ENCODE measurements at regions of chr15 and their contacts with region 1.

Region 1: DNA sequence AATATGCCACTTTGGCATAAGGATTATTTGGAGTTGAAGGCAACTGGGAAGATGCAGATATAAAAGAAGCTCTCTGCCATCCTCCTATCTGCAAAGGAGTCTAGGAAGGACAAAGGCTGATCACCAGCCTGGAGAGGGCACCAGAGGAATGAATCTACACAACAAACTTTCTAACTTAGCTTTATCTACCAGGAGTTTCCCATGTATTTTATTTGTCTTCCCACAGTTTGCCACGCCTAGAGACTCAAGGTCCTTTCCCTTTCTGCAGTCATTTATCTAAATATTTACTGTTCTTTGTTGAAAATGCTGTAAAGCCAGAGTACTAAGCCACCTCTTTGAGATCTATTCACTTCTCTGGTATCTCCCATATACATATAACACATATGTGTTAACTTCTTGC is 32.2 kb downstream of the GPR176 start:
- DNase-seq: peak; percentile 15
- ATAC-seq: peak; percentile 83
- H3K4me3 ChIP-seq: no peak overlapping the region
- H3K27ac ChIP-seq: no peak overlapping the region
- H3K4me1 ChIP-seq: no peaks in the 10 kb centered on the region
- H3K27me3 ChIP-seq: no peaks in the 10 kb centered on the region
- CTCF ChIP-seq: peak; percentile 63

Region 2: DNA sequence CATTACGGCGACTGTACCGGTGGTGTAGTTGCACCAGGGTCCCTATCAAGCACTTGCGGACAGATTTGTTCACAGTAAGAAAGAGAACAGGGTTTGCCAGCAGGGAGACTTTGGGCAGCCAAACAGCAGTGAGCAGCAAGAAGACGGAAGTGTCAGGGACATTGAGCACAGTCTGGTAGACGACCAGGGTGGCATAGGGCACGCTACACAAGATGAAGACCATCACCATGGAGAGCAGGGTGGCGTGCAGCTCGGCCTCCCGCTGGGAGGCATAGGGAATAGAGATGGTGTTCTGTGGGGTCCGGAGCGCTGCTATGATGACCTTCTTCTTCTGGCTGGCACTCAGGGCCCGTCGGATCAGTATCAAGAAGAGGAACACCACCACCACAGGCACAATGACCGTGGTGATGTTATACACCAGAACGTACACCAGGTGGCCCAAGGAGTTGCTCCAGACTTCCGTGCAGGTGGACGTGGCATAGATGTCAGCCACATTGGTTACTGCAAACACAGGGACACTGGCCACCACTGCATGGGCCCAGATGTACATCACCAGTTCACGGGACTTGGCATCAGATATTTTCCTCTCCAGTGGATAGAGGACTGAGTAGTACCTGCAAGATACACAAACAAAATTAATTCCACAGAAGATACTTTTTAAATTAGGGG is 86.1 kb before region 1 on chr15:
- CTCF ChIA-PET with region 1: no interaction called
- POLR2A ChIA-PET with region 1: no interaction called
- in situ Hi-C with region 1: loop called (anchors 5 kb)
- intact Hi-C with region 1: no loop called
- DNase-seq: no peak
- ATAC-seq: peak; percentile 93
- H3K4me3 ChIP-seq: no peak overlapping the region
- H3K27ac ChIP-seq: no peak overlapping the region
- H3K4me1 ChIP-seq: no peaks in the 10 kb centered on the region
- H3K27me3 ChIP-seq: no peaks in the 10 kb centered on the region
- CTCF ChIP-seq: peak; percentile 74

Region 3: GRCh38 chr15:39908186-39908585 is 20.4 kb after region 1 on chr15:
- CTCF ChIA-PET with region 1: no interaction called
- POLR2A ChIA-PET with region 1: no interaction called
- in situ Hi-C with region 1: no loop called
- intact Hi-C with region 1: no loop called
- DNase-seq: no peak
- ATAC-seq: peak; percentile 26; the same call in 1 of the 2 replicates
- H3K4me3 ChIP-seq: no peak overlapping the region
- H3K27ac ChIP-seq: no peak overlapping the region
- H3K4me1 ChIP-seq: no peaks in the 10 kb centered on the region
- H3K27me3 ChIP-seq: no peaks in the 10 kb centered on the region
- CTCF ChIP-seq: no peak

Region 4: DNA sequence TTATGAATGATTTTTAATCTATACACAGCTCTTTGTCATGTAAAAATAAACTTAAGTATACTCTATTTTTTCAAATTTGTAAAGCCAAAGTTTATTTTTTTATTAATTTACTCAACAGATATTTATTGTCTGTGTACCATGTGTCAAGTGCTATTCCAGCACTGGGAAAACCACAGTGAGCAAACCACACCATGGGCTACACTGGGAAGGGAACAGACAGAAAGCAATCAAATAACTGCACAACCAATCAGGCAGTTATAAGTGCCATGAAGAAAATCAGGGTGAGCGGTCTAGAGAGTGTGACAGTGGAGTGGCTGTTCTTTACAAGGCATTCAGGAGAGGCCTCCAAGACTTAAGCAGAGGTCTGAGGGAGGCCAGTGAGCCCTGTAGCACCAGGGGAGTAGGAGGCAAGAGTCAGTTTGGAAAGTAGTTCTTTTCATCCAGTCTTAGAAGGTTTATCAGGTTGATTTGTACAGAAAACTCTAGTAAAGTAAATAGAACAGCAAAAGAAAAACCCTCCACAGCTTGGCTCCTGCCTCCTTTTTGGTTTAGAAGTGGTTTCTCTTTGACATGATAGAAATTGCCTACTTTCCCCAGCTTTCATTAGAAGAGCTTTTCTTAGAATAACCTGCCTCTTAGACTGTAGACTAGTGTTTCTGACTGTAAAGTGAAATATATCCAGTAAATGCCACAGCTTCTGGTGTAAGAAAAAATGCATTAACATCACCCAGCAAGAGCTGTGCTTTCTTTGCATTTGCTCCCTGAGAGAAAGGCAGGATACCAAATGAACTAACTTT is 59.8 kb after region 1 on chr15:
- CTCF ChIA-PET with region 1: no interaction called
- POLR2A ChIA-PET with region 1: interaction called, 11 read pairs
- in situ Hi-C with region 1: no loop called
- intact Hi-C with region 1: no loop called
- DNase-seq: no peak
- ATAC-seq: no peak
- H3K4me3 ChIP-seq: no peak overlapping the region
- H3K27ac ChIP-seq: no peak overlapping the region
- H3K4me1 ChIP-seq: no peaks in the 10 kb centered on the region
- H3K27me3 ChIP-seq: no peaks in the 10 kb centered on the region
- CTCF ChIP-seq: no peak

Measured in Panc1 (cell line).